ENCODE measurements at regions of chr1 and their contacts with region 1.

Region 1: DNA sequence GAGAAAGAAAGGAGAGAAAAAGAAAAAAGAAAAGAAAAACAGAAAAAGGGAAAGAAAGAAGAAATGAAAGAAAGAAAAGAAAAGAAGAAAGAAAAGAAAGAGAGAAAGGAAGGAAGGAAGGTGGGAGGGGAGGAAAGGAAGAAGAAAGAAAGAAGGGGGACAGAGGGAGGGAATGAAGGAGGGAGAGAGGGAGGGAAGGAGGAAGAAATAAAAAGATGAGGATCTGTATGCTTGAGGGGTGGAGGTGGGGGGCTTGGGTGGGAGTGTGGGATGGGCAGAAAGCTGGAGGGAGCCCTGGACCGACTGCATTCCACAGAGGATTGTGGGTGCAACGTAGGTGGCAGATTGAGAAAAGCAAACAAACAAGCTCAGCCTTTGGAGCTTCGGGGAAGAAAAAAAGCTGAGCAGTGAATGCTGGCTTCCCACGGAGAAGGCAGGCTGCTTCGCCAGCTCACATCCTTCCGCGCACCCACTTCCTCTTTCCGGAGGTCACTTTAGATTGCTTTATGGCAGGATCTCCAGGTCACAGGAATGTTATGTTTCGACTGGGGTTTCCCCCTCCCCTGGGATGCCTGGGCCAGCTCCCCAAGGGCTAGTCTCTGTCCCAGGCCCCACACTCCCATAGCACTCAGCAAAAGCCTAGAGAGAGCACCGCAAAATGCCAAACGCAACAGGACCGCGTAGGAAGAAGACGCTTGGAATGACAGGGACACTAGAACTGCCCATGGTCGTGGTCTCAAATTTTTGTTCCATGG is 20.7 kb upstream of the LGALS8 start:
- DNase-seq: peak; percentile 81 to 99
- H3K4me3 ChIP-seq: peak overlapping the region; percentile 37; the same call in 1 of the 2 replicates
- H3K27ac ChIP-seq: peak overlapping the region; percentile 96
- H3K4me1 ChIP-seq: peaks cover 53% of the 10 kb centered on the region
- H3K27me3 ChIP-seq: no peaks in the 10 kb centered on the region
- CTCF ChIP-seq: no peak

Region 2: DNA sequence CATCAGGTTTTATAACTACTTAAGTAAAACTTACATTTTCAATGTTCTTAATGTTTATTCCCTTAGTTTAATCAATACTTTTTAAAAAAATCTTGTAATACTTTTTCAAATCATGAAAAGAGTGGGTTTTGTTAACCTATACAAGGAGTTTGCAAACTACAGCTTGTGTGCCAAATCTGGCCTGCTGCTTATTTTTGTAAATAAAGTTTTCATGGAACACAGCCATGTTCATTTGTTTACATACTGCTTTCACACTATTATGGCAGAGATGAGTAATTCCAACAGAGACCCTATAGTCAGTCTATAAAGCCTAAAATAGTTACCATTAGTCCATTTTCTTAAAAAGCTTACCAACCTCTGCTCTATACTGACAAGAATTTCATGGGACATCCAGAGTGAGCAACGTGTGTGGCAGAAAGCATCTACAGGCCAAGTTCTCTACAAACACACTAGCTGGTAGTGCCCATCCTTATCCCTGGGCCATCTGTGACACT is 263.9 kb before region 1 on chr1:
- CTCF ChIA-PET with region 1: interaction called, 20 read pairs
- POLR2A ChIA-PET with region 1: no interaction called
- intact Hi-C with region 1: no loop called
- DNase-seq: no peak
- H3K4me3 ChIP-seq: no peak overlapping the region
- H3K27ac ChIP-seq: no peak overlapping the region
- H3K4me1 ChIP-seq: no peaks in the 10 kb centered on the region
- H3K27me3 ChIP-seq: no peaks in the 10 kb centered on the region
- CTCF ChIP-seq: no peak

Region 3: GRCh38 chr1:236394905-236395780 is 107.9 kb before region 1 on chr1:
- CTCF ChIA-PET with region 1: no interaction called
- POLR2A ChIA-PET with region 1: no interaction called
- intact Hi-C with region 1: no loop called
- DNase-seq: no peak
- H3K4me3 ChIP-seq: no peak overlapping the region
- H3K27ac ChIP-seq: no peak overlapping the region
- H3K4me1 ChIP-seq: peaks cover 12% of the 10 kb centered on the region
- H3K27me3 ChIP-seq: no peaks in the 10 kb centered on the region
- CTCF ChIP-seq: no peak

Region 4: DNA sequence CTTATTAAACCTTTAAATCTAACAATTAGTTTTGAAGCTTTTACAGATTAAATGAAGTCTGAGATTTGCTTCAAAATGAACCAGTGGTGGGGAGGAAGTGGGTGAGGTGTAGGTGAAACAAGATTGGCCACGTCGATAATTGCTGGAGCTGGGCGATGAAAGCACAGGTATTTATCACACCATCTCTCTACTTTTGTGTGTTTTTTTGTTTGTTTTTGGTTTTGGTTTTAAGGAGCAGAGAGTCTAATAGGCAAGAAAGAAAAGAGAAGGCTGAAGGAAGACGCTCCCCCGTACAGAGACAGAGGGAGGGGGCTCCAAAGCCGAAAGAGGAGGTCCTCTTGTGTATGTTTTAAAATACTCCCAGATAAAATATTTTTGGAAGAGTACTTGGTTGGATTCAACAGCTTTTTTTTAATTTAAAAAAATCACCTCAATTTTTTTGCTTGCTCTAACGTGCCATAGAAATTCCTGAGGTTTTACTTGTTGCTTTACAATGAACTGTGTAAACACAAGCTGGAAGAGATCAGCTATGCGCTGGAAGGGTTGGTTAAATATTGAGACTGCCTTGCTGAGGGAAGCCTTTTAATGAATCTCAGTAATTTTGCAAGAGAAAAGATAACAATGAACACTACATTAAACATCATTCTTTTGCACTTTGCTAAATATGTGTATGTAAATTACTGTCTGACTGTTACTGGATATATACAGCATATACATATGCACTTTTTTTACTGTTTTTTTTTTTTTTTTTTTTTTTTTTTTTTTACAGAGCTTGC is 14.1 kb after region 1 on chr1:
- CTCF ChIA-PET with region 1: interaction called, 4 read pairs
- POLR2A ChIA-PET with region 1: interaction called, 8 read pairs
- intact Hi-C with region 1: loop called (anchors 1 kb)
- DNase-seq: peak; percentile 38 to 97
- H3K4me3 ChIP-seq: peak overlapping the region; percentile 42; the same call in 1 of the 2 replicates
- H3K27ac ChIP-seq: peak overlapping the region; percentile 93
- H3K4me1 ChIP-seq: peaks cover 50% of the 10 kb centered on the region
- H3K27me3 ChIP-seq: no peaks in the 10 kb centered on the region
- CTCF ChIP-seq: no peak

Region 5: GRCh38 chr1:236523701-236524141 is 20.7 kb after region 1 on chr1 and contains the start of gene LGALS8:
- CTCF ChIA-PET with region 1: no interaction called
- POLR2A ChIA-PET with region 1: no interaction called
- intact Hi-C with region 1: loop called (anchors 1 kb)
- DNase-seq: peak; percentile 63 to 73
- H3K4me3 ChIP-seq: peak within 1 kb of the TSS; percentile 77
- H3K27ac ChIP-seq: peak within 1 kb of the TSS; percentile 83
- H3K4me1 ChIP-seq: peaks cover 36% of the 10 kb centered on the region
- H3K27me3 ChIP-seq: no peaks in the 10 kb centered on the region
- CTCF ChIP-seq: no peak
- total RNA-seq, gene LGALS8: 36.4 and 59.2 TPM in 2 replicates

Measured in PC-9 (cell line).